ENCODE measurements at regions of chr3 and their contacts with region 1.

Region 1: GRCh38 chr3:66302288-66302687 is 81.5 kb downstream of the SLC25A26 start:
- DNase-seq: no peak
- ATAC-seq: no peak
- H3K4me3 ChIP-seq: no peak overlapping the region
- H3K27ac ChIP-seq: peak overlapping the region in 1 of 4 donors; percentile 20
- H3K4me1 ChIP-seq: peaks cover 12 to 42% (median 41%) of the 10 kb centered on the region in 3 donors
- H3K27me3 ChIP-seq: no peaks in the 10 kb centered on the region
- CTCF ChIP-seq: no peak

Region 2: DNA sequence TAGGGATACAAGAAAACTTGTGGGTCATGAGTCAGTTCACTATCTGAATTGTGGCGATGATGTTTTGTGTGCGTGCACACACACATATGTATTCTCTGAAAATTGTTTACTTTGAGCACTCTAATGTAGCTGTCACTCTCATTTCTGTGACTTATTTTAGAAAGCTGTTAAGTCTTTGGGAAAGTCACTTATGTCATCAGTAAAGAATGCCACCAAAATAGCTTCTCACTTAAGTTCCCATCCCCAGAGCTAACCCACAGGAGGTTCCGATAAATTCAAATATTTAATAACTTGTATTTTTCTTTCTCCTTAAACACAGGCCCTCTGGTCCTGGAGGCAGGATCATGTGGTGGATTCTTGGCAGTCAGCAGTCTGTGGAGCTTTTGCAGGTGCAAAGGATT is 60.3 kb after region 1 on chr3:
- intact Hi-C with region 1: loop called in 1 of 3 experiments (anchors 10 kb)
- DNase-seq: no peak
- ATAC-seq: no peak
- H3K4me3 ChIP-seq: no peak overlapping the region
- H3K27ac ChIP-seq: no peak overlapping the region
- H3K4me1 ChIP-seq: no peaks in the 10 kb centered on the region
- H3K27me3 ChIP-seq: no peaks in the 10 kb centered on the region
- CTCF ChIP-seq: no peak

Region 3: DNA sequence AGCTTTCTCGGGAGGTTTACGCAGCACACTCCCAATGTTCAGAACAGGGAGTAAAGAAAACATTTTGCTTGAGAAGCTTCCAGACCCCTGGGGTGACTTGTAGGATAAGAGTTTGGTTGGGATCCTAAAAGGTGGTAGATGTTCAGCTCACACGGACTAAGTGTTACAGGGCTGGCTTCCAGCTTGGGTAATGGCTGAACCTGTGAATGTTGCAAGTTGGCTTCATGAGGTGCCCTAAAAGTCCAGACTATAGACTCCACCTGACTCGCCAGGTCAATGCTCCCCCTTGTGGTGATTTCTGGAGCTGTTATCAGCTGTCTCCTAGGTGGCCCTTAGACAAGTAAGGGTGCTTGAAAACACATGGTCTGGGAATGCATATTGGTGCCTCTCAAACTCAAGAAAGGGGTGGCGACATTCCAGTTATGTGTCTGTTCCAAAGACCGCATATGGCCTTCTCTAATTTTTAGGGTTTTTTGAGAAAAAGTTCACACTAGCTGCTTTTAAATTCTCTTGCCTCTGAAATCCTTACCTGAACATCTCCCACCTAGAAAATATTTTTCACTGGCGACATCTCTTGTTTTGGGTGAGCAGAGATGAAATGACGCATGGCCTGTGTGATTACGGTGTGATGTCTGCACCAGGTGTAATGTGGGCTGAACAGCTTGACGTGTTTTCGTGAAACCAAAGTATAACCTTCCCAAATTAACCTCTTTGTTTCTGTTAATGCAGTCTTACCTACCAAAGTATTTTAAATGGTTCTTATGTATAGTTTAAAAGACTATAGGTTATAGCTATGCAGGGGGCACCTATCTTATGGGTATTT is 520.1 kb after region 1 on chr3:
- intact Hi-C with region 1: loop called in 1 of 3 experiments (anchors 10 kb)
- DNase-seq: peak; percentile 70 to 83 (median 76)
- ATAC-seq: peak; percentile 61 to 81 (median 71)
- H3K4me3 ChIP-seq: no peak overlapping the region
- H3K27ac ChIP-seq: peak overlapping the region; percentile 34 to 75 (median 57)
- H3K4me1 ChIP-seq: peaks cover 37 to 76% (median 51%) of the 10 kb centered on the region in 3 donors
- H3K27me3 ChIP-seq: no peaks in the 10 kb centered on the region
- CTCF ChIP-seq: peak; percentile 43 to 70 (median 68)